ENCODE measurements at regions of chr18 and their contacts with region 1.

Region 1: DNA sequence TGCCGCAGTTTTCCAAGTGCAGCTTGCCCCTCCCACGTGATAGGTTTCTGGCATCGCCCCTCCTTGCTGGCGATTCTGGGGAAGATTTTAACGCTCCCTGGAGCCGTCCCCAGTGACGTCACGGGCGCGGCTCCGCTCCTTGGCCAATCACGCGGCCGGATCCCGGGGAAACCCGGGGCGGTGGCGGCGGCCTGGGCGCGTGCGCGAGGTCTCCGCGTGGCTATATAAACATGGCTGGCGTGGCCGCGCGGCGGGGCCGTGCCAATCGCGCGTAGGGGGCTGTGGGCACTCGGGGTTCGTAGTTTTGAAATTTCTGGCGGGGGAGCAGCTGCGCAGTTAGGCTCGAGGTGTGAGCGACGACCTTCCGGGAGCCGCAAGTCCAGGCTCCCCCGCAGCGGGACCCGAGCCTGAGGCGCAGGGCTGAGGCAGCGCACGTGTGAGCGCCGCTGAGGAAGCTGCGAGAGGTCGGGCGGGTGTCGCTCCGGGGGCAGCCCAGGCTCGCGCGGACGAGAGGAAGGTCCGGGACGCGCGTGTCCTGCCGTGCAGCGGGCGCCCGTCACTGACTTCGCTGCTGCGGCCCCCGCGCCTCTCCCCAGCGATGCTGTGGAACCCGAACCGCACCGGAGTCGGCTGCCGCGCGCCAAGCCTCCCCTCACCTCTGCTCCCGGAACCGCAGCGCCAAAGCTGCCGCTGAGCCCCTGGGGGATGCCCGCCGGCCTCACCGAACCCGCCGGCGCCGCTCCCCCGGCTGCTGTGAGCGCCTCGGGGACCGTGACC is at the start of gene TAF4B:
- DNase-seq: peak; percentile 95
- H3K4me3 ChIP-seq: peak within 1 kb of the TSS; percentile 80
- H3K27ac ChIP-seq: peak within 1 kb of the TSS; percentile 62
- H3K4me1 ChIP-seq: peaks cover 37% of the 10 kb centered on the region
- CTCF ChIP-seq: no peak
- total RNA-seq, gene TAF4B: 48.7 and 52.3 TPM in 2 replicates

Region 2: GRCh38 chr18:26090130-26091046 is 136.0 kb before region 1 on chr18 and contains the start of gene SS18:
- CTCF ChIA-PET with region 1: no interaction called
- POLR2A ChIA-PET with region 1: interaction called, 4 read pairs
- intact Hi-C with region 1: loop called (anchors 1 kb)
- DNase-seq: peak; percentile 98
- H3K4me3 ChIP-seq: peak within 1 kb of the TSS; percentile 97
- H3K27ac ChIP-seq: peak within 1 kb of the TSS; percentile 90
- H3K4me1 ChIP-seq: peaks cover 44% of the 10 kb centered on the region
- CTCF ChIP-seq: peak; percentile 26; the same call in 1 of the 2 replicates
- total RNA-seq, gene SS18: 116 and 155 TPM in 2 replicates

Region 3: DNA sequence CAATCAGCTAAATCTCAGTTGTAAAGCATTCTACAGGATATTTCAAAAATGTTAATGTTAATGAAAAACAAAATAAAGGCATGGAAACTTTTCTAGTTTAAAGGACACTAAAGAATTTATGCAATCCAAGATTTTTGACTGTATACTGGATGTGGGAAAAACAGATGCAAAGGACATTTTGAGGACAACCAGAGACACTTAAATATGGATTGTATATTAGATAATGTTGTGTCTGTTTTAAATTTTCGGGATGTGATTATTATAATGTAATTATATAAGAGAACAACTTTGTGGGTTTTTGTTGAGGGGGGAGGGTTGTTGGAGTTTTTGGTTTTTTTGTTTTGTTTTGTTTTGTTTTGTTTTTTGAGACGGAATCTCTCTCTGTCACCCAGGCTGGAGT is 61.8 kb before region 1 on chr18:
- CTCF ChIA-PET with region 1: no interaction called
- POLR2A ChIA-PET with region 1: interaction called, 5 read pairs
- intact Hi-C with region 1: loop called (anchors 2 kb)
- DNase-seq: no peak
- H3K4me3 ChIP-seq: no peak overlapping the region
- H3K27ac ChIP-seq: no peak overlapping the region
- H3K4me1 ChIP-seq: peaks cover 45% of the 10 kb centered on the region
- CTCF ChIP-seq: no peak

Region 4: GRCh38 chr18:26190506-26190905 is 35.9 kb before region 1 on chr18:
- CTCF ChIA-PET with region 1: no interaction called
- POLR2A ChIA-PET with region 1: interaction called, 9 read pairs
- intact Hi-C with region 1: loop called (anchors 2 kb)
- DNase-seq: peak; percentile 94
- H3K4me3 ChIP-seq: peak overlapping the region; percentile 56
- H3K27ac ChIP-seq: peak overlapping the region; percentile 99
- H3K4me1 ChIP-seq: peaks cover 55% of the 10 kb centered on the region
- CTCF ChIP-seq: no peak

Region 5: DNA sequence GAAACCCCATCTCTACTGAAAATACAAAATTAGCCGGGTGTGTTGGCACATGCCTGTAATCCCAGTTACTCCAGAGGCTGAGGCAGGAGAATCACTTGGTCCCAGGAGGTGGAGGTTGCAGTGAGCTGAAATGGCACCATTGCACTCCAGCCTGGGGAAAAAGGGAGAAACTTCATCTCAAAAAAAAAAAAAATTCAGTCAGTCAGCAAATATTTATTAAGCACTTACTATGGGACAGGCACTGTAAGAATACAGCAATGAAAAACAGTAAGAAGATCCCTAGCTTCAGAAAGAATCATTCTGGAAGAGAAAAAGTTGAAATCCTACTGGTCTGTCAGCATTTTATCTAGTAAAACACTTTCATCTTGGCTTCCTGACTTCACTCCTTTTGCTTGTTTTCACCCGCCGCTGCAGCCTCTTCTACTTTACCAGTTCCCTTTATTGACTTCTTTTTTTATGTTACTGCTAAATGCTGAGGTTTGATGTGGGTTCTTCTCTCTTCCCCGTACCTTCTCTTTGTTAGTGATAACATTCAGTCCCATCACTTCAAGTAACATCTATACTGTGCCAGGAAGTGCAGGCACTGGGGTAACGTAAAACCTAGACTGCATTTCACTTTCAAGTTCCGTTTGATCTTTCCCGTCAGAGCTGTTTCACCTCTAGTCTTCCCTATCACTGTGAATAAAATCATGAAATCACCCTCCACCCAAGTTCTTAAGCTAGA is 11.0 kb before region 1 on chr18:
- CTCF ChIA-PET with region 1: interaction called, 3 read pairs
- POLR2A ChIA-PET with region 1: interaction called, 26 read pairs
- intact Hi-C with region 1: no loop called
- DNase-seq: peak; percentile 83
- H3K4me3 ChIP-seq: peak overlapping the region; percentile 66
- H3K27ac ChIP-seq: peak overlapping the region; percentile 93
- H3K4me1 ChIP-seq: peaks cover 45% of the 10 kb centered on the region
- CTCF ChIP-seq: no peak

Region 6: GRCh38 chr18:26255695-26256622 is 29.5 kb after region 1 on chr18:
- CTCF ChIA-PET with region 1: no interaction called
- POLR2A ChIA-PET with region 1: no interaction called
- intact Hi-C with region 1: loop called (anchors 2 kb)
- DNase-seq: peak; percentile 55
- H3K4me3 ChIP-seq: no peak overlapping the region
- H3K27ac ChIP-seq: peak overlapping the region; percentile 51
- H3K4me1 ChIP-seq: peaks cover 57% of the 10 kb centered on the region
- CTCF ChIP-seq: no peak